ENCODE measurements at regions of chr6 and their contacts with region 1.

Region 1: GRCh38 chr6:41984623-41985022 is 43.0 kb upstream of the CCND3 start:
- DNase-seq: no peak
- ATAC-seq: no peak
- H3K4me3 ChIP-seq: no peak overlapping the region
- H3K27ac ChIP-seq: no peak overlapping the region
- H3K4me1 ChIP-seq: no peaks in the 10 kb centered on the region
- H3K27me3 ChIP-seq: no peaks in the 10 kb centered on the region
- CTCF ChIP-seq: no peak

Region 2: DNA sequence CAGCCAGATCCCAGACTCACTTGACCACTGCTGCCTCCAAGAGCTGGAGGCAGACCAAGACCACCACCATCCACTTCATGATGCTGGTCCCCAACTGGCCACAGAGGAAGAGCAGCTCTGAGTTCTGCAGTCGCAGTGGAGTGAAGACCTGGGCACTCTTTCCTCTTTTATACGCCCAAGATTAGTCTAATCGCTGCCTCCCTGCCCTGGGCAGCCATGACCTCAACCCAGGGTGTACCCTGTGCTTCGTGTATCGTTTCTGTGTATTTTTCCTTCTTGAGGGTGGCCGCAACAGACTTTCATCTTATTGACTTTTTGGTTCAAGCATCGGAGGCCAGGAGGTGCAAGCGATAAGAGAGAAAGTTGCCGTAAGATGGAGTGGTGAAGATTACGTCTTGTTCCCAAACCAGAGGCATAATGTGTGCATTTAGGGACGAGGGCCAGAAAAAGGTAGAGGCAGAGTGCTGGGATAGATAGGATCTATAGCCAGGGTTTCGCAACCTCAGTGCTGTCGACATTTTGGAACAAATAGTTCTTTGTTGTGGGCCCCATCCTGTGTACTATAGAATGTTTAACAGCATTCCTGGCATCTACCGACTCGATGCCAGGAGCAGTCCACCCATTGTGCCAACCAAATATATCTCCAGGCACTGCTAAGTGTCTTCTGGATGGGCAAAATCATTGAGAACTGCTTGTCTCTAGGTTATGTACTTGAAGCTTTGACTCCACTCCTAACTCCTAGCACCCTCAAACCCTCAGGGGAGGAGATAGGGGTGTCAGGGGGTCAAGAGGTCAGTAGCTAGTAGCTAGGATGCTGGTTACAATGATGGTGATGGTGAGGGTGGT is 237.1 kb before region 1 on chr6 and contains the start of gene PGC:
- CTCF ChIA-PET with region 1: no interaction called
- POLR2A ChIA-PET with region 1: no interaction called
- in situ Hi-C with region 1: no loop called
- intact Hi-C with region 1: no loop called
- DNase-seq: no peak
- ATAC-seq: no peak
- H3K4me3 ChIP-seq: no peak within 1 kb of the TSS
- H3K27ac ChIP-seq: no peak within 1 kb of the TSS
- H3K4me1 ChIP-seq: 0 out of 2 replicates have a peak, but pooled peaks cover 4% of the 10 kb centered on the region
- H3K27me3 ChIP-seq: no peaks in the 10 kb centered on the region
- CTCF ChIP-seq: no peak
- total RNA-seq, gene PGC: 0.18 TPM

Region 3: DNA sequence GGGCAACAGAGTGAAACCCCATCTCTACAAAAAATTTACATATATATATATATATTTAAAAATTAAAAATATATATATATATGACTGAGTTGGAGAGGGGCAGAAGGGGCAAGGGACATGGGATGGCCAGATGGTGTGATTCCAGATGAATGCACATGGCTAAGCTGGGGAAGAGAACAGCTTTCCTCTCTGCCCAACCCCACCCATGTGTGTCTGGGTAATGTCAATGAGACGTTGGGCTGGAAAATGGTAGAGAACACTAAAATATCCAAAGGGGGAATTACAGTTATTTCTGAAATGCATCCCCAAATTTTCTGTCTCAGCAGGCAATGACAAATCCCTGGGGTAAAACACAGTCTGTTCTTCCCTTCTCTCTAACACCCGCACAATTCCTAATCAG is 11.8 kb before region 1 on chr6:
- CTCF ChIA-PET with region 1: interaction called, 9 read pairs
- POLR2A ChIA-PET with region 1: interaction called, 10 read pairs
- in situ Hi-C with region 1: no loop called
- intact Hi-C with region 1: no loop called
- DNase-seq: no peak
- ATAC-seq: no peak
- H3K4me3 ChIP-seq: no peak overlapping the region
- H3K27ac ChIP-seq: no peak overlapping the region
- H3K4me1 ChIP-seq: peaks cover 5% of the 10 kb centered on the region; the same call in 1 of the 2 replicates
- H3K27me3 ChIP-seq: no peaks in the 10 kb centered on the region
- CTCF ChIP-seq: no peak

Region 4: GRCh38 chr6:42030585-42031506 is 46.2 kb after region 1 on chr6:
- CTCF ChIA-PET with region 1: no interaction called
- POLR2A ChIA-PET with region 1: no interaction called
- in situ Hi-C with region 1: no loop called
- intact Hi-C with region 1: no loop called
- DNase-seq: no peak
- ATAC-seq: 0 out of 2 replicates have a peak, but pooled peaks have one; percentile 22
- H3K4me3 ChIP-seq: no peak overlapping the region
- H3K27ac ChIP-seq: no peak overlapping the region
- H3K4me1 ChIP-seq: no peaks in the 10 kb centered on the region
- H3K27me3 ChIP-seq: no peaks in the 10 kb centered on the region
- CTCF ChIP-seq: no peak